Aorta (tissue), 5 donors: ENCODE measurements at regions of chr3 and their contacts with region 1.

Region 1: GRCh38 chr3:187319699-187320302 is 28.3 kb upstream of the MASP1 start:
- DNase-seq: peak; percentile 78 to 81
- ATAC-seq: peak; percentile 94
- H3K4me3 ChIP-seq: no peak overlapping the region
- H3K27ac ChIP-seq: no peak overlapping the region
- H3K4me1 ChIP-seq: no peaks in the 10 kb centered on the region
- H3K27me3 ChIP-seq: no peaks in the 10 kb centered on the region

Region 2: GRCh38 chr3:187223799-187224198 is 96.0 kb before region 1 on chr3:
- intact Hi-C with region 1: loop called (anchors 2 to 5 kb)
- DNase-seq: no peak
- ATAC-seq: no peak
- H3K4me3 ChIP-seq: no peak overlapping the region
- H3K27ac ChIP-seq: no peak overlapping the region
- H3K4me1 ChIP-seq: peaks cover 0 to 2% of the 10 kb centered on the region in 2 donors
- H3K27me3 ChIP-seq: no peaks in the 10 kb centered on the region

Region 3: GRCh38 chr3:187679638-187680396 is 360.0 kb after region 1 on chr3:
- intact Hi-C with region 1: loop called (anchors 1 to 2 kb)
- DNase-seq: peak; percentile 79 to 90
- ATAC-seq: peak; percentile 91
- H3K4me3 ChIP-seq: no peak overlapping the region
- H3K27ac ChIP-seq: no peak overlapping the region
- H3K4me1 ChIP-seq: no peaks in the 10 kb centered on the region
- H3K27me3 ChIP-seq: no peaks in the 10 kb centered on the region

Region 4: GRCh38 chr3:187714404-187714979 is 394.7 kb after region 1 on chr3:
- intact Hi-C with region 1: loop called in 1 of 2 experiments (anchors 10 kb)
- DNase-seq: no peak
- ATAC-seq: peak; percentile 91
- H3K4me3 ChIP-seq: no peak overlapping the region
- H3K27ac ChIP-seq: no peak overlapping the region
- H3K4me1 ChIP-seq: no peaks in the 10 kb centered on the region
- H3K27me3 ChIP-seq: no peaks in the 10 kb centered on the region